ENCODE measurements at regions of chr2 and their contacts with region 1.

Region 1: DNA sequence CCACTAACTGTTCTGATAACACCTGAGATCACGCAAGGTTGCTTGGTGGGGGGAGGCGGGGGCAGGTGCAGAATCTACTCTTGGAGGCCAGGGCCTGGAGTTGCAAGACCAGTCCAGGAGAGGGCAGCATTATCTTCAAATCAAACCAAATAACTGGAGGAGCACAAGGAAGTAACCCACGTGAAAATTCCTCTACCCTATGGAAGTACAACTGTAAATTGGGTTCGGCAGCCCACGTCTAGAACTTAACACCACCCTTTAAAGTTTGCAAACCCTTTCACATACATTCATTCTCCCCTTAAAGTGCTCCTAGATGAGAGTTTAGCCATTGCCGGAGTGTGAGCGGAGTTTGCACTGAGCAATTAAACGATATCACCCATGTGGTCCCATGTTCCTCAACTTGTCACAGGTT is 19.6 kb upstream of the CXCR1 start:
- DNase-seq: peak; percentile 43
- ATAC-seq: peak; percentile 99
- H3K4me3 Mint-ChIP-seq: no peak overlapping the region
- H3K27ac Mint-ChIP-seq: no peak overlapping the region
- H3K4me1 Mint-ChIP-seq: peaks cover 7% of the 10 kb centered on the region
- H3K27me3 Mint-ChIP-seq: peaks cover 1% of the 10 kb centered on the region
- CTCF ChIP-seq: peak; percentile 3

Region 2: GRCh38 chr2:218229239-218229638 is 42.9 kb after region 1 on chr2:
- CTCF ChIA-PET with region 1: interaction called, 4 read pairs
- POLR2A ChIA-PET with region 1: interaction called, 3 read pairs
- intact Hi-C with region 1: loop called (anchors 1 kb)
- DNase-seq: no peak
- ATAC-seq: peak; percentile 91
- H3K4me3 Mint-ChIP-seq: peak overlapping the region; percentile 56
- H3K27ac Mint-ChIP-seq: peak overlapping the region; percentile 87
- H3K4me1 Mint-ChIP-seq: peaks cover 67% of the 10 kb centered on the region
- H3K27me3 Mint-ChIP-seq: no peaks in the 10 kb centered on the region
- CTCF ChIP-seq: no peak

Region 3: GRCh38 chr2:218245214-218245613 is 58.9 kb after region 1 on chr2:
- CTCF ChIA-PET with region 1: no interaction called
- POLR2A ChIA-PET with region 1: no interaction called
- intact Hi-C with region 1: loop called (anchors 5 kb)
- DNase-seq: no peak
- ATAC-seq: no peak
- H3K4me3 Mint-ChIP-seq: no peak overlapping the region
- H3K27ac Mint-ChIP-seq: peak overlapping the region; percentile 18
- H3K4me1 Mint-ChIP-seq: no peaks in the 10 kb centered on the region
- H3K27me3 Mint-ChIP-seq: no peaks in the 10 kb centered on the region
- CTCF ChIP-seq: no peak

Region 4: DNA sequence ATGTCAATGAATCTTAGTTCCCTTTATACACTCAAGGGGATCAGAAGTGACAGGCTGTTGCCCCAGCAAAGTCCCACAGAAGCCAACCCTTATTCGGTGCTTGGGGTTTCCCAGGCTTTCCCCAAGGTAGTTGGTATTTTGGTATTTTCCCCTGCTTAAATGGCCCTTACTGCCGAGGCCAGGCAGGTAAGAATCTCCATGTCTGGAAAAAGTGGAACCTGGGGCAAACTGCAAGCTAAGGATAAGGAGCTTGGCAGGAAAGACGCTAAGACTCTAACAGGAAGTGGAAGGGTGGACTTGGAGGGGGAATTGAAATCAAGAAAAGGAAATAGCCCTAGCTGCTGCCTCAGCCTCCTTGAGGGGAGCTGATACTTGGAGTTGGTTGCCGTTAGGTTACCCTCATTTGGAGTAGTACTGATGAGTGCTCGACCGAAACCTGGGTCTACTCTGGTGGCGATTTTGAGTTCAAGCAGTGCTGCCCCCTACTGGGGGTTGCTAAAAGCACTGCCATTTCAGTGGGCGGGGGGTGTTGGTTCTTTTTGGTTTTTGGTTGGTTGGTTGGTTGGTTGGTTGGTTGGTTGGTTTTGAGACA is 71.1 kb after region 1 on chr2:
- CTCF ChIA-PET with region 1: interaction called, 12 read pairs
- POLR2A ChIA-PET with region 1: no interaction called
- intact Hi-C with region 1: loop called (anchors 1 kb)
- DNase-seq: peak; percentile 67
- ATAC-seq: peak; percentile 89
- H3K4me3 Mint-ChIP-seq: peak overlapping the region; percentile 73
- H3K27ac Mint-ChIP-seq: peak overlapping the region; percentile 92
- H3K4me1 Mint-ChIP-seq: peaks cover 70% of the 10 kb centered on the region
- H3K27me3 Mint-ChIP-seq: no peaks in the 10 kb centered on the region
- CTCF ChIP-seq: no peak

Region 5: DNA sequence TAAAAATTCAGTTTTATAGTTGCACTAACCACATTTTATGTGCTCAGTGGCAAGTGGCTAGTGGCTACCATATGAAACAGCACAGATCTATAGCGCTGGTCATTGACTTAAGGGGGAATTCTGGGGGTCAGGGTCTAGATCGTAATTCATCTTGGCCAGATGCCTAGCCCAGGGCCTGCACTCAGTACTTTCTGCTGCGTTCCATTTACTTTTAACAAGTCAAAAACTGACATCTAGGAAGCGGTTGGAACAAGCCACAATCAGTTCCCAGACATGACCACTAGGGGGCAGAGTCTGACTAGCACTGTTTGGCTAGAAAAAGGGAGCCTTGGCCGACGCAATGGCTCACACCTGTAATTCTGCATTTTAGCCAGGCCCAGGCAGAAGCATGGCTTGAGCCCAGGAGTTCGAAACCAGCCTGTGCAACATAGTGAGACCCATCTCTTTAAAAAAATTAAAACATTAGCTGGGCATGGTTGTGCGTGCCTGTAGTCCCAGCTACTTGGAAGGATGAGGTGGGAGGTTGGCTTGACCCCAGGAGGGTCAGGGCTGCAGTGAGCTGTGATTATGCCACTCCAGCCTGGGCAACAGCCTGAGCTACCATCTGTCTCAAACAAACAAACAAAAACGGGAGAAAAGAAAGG is 114.9 kb after region 1 on chr2:
- CTCF ChIA-PET with region 1: no interaction called
- POLR2A ChIA-PET with region 1: no interaction called
- intact Hi-C with region 1: loop called (anchors 1 kb)
- DNase-seq: peak; percentile 61
- ATAC-seq: peak; percentile 99
- H3K4me3 Mint-ChIP-seq: no peak overlapping the region
- H3K27ac Mint-ChIP-seq: peak overlapping the region; percentile 53
- H3K4me1 Mint-ChIP-seq: peaks cover 8% of the 10 kb centered on the region
- H3K27me3 Mint-ChIP-seq: no peaks in the 10 kb centered on the region
- CTCF ChIP-seq: no peak

Region 6: DNA sequence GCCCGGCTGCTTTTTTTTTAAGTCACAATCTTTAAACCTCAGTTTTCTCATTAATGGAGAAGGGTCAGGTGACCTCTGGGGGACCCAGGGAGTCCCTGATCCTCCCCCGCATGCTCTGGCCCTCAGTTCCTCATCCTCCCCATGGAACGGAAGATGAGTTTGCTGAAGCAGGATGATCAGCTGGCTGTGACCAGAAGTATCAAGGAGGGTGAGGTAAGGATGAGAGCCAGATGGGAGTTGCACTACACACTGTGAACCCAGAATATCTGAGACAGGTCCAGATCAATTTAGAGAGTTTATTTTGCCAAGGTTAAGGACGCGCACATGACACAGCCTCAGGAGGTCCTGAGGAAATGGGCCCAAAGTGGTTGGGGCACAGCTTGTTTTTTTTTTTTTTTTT is 174.1 kb after region 1 on chr2:
- CTCF ChIA-PET with region 1: no interaction called
- POLR2A ChIA-PET with region 1: no interaction called
- intact Hi-C with region 1: loop called (anchors 1 kb)
- DNase-seq: no peak
- ATAC-seq: no peak
- H3K4me3 Mint-ChIP-seq: no peak overlapping the region
- H3K27ac Mint-ChIP-seq: peak overlapping the region; percentile 25
- H3K4me1 Mint-ChIP-seq: peaks cover 11% of the 10 kb centered on the region
- H3K27me3 Mint-ChIP-seq: no peaks in the 10 kb centered on the region
- CTCF ChIP-seq: no peak

Region 7: GRCh38 chr2:218648088-218648786 is 461.9 kb after region 1 on chr2:
- CTCF ChIA-PET with region 1: no interaction called
- POLR2A ChIA-PET with region 1: no interaction called
- intact Hi-C with region 1: loop called (anchors 1 kb)
- DNase-seq: peak; percentile 36
- ATAC-seq: peak; percentile 88
- H3K4me3 Mint-ChIP-seq: no peak overlapping the region
- H3K27ac Mint-ChIP-seq: no peak overlapping the region
- H3K4me1 Mint-ChIP-seq: no peaks in the 10 kb centered on the region
- H3K27me3 Mint-ChIP-seq: no peaks in the 10 kb centered on the region
- CTCF ChIP-seq: no peak